ENCODE measurements at regions of chrX and their contacts with region 1.

Region 1: GRCh38 chrX:47560831-47561652 is at the start of gene ARAF:
- DNase-seq: peak; percentile 97
- ATAC-seq: peak; percentile 95 to 96
- total RNA-seq, gene ARAF: 64.4 to 75.0 TPM

Region 2: GRCh38 chrX:47540754-47541538 is 20.1 kb before region 1 on chrX:
- intact Hi-C with region 1: no loop called
- DNase-seq: peak; percentile 73
- ATAC-seq: peak; percentile 99 to 100

Region 3: DNA sequence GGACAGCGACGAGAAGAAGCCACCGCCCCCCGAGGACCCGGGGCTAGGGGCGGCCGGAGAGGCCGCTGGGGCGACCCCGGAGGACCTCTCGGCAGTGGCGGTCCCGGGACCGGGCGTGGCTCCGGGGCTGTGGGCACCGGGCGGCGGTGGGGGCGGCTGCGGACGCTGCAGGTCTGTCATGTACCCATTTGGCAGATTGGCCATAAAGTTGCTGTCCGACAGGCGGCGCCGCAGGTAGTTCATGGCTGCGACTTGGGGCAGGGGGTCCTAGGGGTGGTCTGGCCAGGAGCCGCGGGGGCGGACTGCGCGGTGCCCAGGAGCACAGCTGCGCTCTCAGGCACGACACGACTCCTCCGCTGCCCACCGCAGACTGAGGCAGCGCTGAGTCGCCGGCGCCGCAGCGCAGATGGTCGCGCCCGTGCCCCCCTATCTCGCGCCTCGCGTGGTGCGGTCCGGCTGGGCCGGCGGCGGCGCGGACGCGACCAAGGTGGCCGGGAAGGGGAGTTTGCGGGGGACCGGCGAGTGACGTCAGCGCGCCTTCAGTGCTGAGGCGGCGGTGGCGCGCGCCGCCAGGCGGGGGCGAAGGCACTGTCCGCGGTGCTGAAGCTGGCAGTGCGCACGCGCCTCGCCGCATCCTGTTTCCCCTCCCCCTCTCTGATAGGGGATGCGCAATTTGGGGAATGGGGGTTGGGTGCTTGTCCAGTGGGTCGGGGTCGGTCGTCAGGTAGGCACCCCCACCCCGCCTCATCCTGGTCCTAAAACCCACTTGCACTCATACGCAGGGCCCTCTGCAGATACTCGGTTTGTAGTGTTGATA is 58.7 kb after region 1 on chrX and contains the start of gene SYN1:
- intact Hi-C with region 1: loop called in 1 of 2 experiments (anchors 10 kb)
- DNase-seq: peak; percentile 86
- ATAC-seq: peak; percentile 94 to 96
- total RNA-seq, gene SYN1: 4.4 to 7.0 TPM

Region 4: GRCh38 chrX:47644557-47645091 is 83.6 kb after region 1 on chrX:
- intact Hi-C with region 1: loop called in 1 of 2 experiments (anchors 5 kb)
- DNase-seq: no peak
- ATAC-seq: peak; percentile 49 to 68